HCT116 (cell line): ENCODE measurements at regions of chr19 and their contacts with region 1.

Region 1: DNA sequence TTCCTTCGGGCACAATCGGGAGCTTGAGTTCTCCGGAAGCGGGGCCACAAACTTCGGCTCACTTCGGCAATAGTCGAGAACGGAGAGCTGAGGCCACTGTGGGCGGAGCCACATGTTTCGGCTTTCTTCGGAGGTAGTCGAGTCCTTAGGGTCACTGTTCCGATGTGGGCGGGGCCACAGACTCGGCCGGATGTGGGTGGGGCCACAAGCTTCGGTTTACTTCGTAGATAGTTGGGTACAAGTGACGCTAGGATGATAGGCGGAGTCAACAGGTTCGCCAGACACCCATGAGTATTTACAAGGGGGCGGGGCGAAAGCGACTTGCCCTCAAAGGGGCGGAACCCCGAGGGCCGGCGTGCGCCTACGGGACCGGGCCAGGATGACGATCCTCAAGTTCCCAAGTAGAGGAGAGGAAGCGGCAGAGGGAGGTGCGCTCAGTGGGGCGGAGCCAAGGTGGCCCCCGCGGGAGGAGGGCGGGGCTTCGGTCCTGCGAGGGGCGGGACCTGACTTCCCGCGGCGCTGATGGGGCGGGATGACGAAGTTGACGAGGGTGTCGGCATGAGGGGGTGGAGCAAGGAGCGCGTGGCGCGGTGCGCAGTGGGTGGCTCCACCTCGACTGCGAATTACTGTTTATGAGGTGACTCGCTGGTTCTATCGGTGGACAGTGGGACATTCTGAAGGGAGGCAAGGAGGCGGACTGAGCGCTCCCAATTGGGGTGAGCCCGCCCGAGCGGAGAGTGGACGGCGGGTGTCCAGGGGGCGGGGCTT is 539 bp upstream of the MBOAT7 start:
- DNase-seq: peak; percentile 100
- ATAC-seq: peak; percentile 69
- H3K4me3 ChIP-seq: peak overlapping the region; percentile 87 to 91
- H3K27ac ChIP-seq: peak overlapping the region; percentile 100
- H3K4me1 ChIP-seq: peaks cover 13 to 21% of the 10 kb centered on the region in 2 experiments
- H3K27me3 ChIP-seq: no peaks in the 10 kb centered on the region
- CTCF ChIP-seq: no peak
- POLR2A ChIP-seq: peak; percentile 37
- RAD21 ChIP-seq: no peak

Region 2: DNA sequence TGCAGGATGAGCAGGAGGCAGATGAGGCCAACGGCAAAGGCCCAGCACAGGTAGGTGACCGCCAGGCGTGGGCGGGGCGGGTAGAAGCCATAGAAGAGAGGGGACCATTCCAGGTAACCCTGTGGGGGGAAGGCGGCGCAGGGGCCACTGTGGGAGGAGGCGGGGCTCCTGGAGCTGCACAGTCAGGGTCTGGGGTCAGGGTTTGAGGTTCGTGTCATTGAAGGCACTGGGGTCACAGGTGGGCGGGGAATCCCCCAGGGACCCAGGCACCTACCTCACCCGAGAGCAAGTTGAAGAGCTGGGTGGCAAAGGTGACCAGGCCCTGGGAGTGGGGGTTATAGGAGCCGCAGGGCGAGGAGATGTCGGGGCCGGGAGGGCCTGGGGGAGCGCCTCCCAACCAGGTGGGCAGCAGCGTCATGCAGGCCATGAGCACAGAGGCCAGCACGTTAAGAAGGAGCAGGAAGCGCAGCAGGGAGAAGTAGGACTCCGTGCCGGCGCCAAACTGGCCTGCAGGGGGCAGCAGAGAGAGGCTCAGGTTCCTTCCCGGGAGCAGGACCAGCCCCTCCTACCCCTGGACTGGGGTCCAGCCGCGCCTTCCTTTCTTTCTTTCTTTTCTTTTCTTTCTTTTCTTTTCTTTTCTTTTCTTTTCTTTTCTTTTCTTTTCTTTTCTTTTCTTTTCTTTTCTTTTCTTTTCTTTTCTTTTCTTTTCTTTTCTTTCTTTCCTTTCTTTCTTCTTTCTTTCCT is 21.6 kb before region 1 on chr19:
- CTCF ChIA-PET with region 1: interaction called, 22 read pairs
- POLR2A ChIA-PET with region 1: interaction called, 29 read pairs
- RAD21 ChIA-PET with region 1: no interaction called
- intact Hi-C with region 1: no loop called
- DNase-seq: peak; percentile 69
- ATAC-seq: peak; percentile 65
- H3K4me3 ChIP-seq: no peak overlapping the region
- H3K27ac ChIP-seq: no peak overlapping the region; the same call in 1 of the 2 replicates
- H3K4me1 ChIP-seq: peaks cover 6 to 32% of the 10 kb centered on the region in 2 experiments; a peak in 3 of 4 replicates
- H3K27me3 ChIP-seq: no peaks in the 10 kb centered on the region
- CTCF ChIP-seq: peak in 2 of 3 experiments; percentile 66 to 91; a peak in 5 of 6 replicates
- POLR2A ChIP-seq: no peak
- RAD21 ChIP-seq: no peak; the same call in 1 of the 2 replicates

Region 3: GRCh38 chr19:54203151-54203611 is 13.3 kb after region 1 on chr19:
- CTCF ChIA-PET with region 1: no interaction called
- POLR2A ChIA-PET with region 1: interaction called, 126 read pairs
- RAD21 ChIA-PET with region 1: no interaction called
- intact Hi-C with region 1: loop called (anchors 1 kb)
- DNase-seq: no peak
- ATAC-seq: no peak
- H3K4me3 ChIP-seq: 0 out of 4 replicates have a peak overlapping the region, but pooled peaks of 1 of the 2 experiments have one; percentile 8
- H3K27ac ChIP-seq: no peak overlapping the region
- H3K4me1 ChIP-seq: peaks cover 9 to 51% of the 10 kb centered on the region in 2 experiments
- H3K27me3 ChIP-seq: no peaks in the 10 kb centered on the region
- CTCF ChIP-seq: no peak
- POLR2A ChIP-seq: no peak
- RAD21 ChIP-seq: no peak

Region 4: GRCh38 chr19:54216891-54217290 is 27.0 kb after region 1 on chr19:
- CTCF ChIA-PET with region 1: no interaction called
- POLR2A ChIA-PET with region 1: no interaction called
- RAD21 ChIA-PET with region 1: no interaction called
- intact Hi-C with region 1: no loop called
- DNase-seq: no peak
- ATAC-seq: no peak
- H3K4me3 ChIP-seq: no peak overlapping the region
- H3K27ac ChIP-seq: no peak overlapping the region
- H3K4me1 ChIP-seq: no peaks in the 10 kb centered on the region
- H3K27me3 ChIP-seq: no peaks in the 10 kb centered on the region
- CTCF ChIP-seq: no peak
- POLR2A ChIP-seq: no peak
- RAD21 ChIP-seq: no peak

Region 5: DNA sequence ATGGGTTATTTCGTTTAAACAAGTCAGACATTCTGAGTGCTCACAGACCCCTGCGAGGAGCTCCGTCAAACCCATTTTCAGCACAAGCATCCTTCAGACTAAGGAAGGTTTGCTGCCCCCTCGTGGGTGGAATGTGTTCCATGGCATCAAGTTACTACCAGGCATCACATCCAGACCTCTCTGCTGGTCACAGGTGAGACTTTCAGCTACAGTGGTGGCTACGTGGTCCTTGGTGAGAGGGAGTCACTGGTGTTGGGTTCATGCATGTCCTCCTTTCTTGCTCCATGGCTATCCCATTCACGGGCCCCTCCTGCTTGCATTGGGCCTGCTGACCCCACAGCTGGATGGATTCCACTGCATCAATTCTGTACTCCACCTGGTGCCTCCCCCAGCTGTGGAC is 76.2 kb after region 1 on chr19:
- CTCF ChIA-PET with region 1: interaction called, 13 read pairs
- POLR2A ChIA-PET with region 1: interaction called, 4 read pairs
- RAD21 ChIA-PET with region 1: no interaction called
- intact Hi-C with region 1: no loop called
- DNase-seq: peak; percentile 77
- ATAC-seq: peak; percentile 99
- H3K4me3 ChIP-seq: no peak overlapping the region
- H3K27ac ChIP-seq: no peak overlapping the region
- H3K4me1 ChIP-seq: no peaks in the 10 kb centered on the region
- H3K27me3 ChIP-seq: peaks cover 23% of the 10 kb centered on the region
- CTCF ChIP-seq: peak; percentile 60 to 90 (median 77); a peak in 5 of 6 replicates
- POLR2A ChIP-seq: no peak
- RAD21 ChIP-seq: peak; percentile 52

Region 6: GRCh38 chr19:54345938-54346386 is 156.0 kb after region 1 on chr19:
- CTCF ChIA-PET with region 1: no interaction called
- POLR2A ChIA-PET with region 1: no interaction called
- RAD21 ChIA-PET with region 1: no interaction called
- intact Hi-C with region 1: no loop called
- DNase-seq: no peak
- ATAC-seq: no peak
- H3K4me3 ChIP-seq: no peak overlapping the region
- H3K27ac ChIP-seq: no peak overlapping the region
- H3K4me1 ChIP-seq: no peaks in the 10 kb centered on the region
- H3K27me3 ChIP-seq: peaks cover 12% of the 10 kb centered on the region; the same call in 1 of the 2 replicates
- CTCF ChIP-seq: no peak
- POLR2A ChIP-seq: no peak
- RAD21 ChIP-seq: no peak